ENCODE measurements at regions of chr3 and their contacts with region 1.

Region 1: GRCh38 chr3:58491506-58492402 is at the start of gene KCTD6:
- DNase-seq: peak; percentile 87
- ATAC-seq: peak; percentile 95
- H3K4me3 Mint-ChIP-seq: peak within 1 kb of the TSS; percentile 86
- H3K27ac Mint-ChIP-seq: peak within 1 kb of the TSS; percentile 76
- H3K4me1 Mint-ChIP-seq: peaks cover 17% of the 10 kb centered on the region
- H3K27me3 Mint-ChIP-seq: peaks cover 35% of the 10 kb centered on the region
- total RNA-seq, gene KCTD6: 5.2 to 6.2 TPM

Region 2: DNA sequence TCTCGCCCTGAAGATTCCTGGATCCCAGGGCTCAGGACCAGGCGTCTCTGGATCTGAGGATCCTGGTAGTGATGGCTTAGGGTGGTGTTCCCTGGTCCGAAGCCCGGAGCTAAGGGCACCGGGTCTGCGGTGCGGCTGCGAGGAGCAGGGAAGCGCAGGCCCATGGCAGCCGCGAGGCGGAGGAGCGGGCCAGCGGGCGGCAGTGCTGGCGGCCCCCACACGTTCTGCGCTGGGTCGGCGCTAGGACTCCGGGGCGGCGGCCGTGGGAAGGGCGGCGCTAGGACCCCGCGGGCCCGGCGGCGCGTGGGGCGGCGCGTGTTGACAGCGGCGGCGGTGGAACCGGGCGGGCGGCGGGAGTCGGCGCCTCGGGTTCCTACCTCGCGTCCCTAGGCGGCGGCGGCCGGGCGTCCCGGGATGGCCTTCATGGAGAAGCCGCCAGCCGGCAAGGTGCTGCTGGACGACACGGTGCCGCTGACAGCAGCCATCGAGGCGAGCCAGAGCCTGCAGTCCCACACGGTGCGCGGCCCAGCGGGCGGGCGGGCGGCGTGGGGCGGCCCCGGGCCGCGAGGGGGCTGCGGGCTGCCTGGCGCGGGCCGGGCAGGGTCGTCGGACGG is 159.1 kb before region 1 on chr3 and contains the start of gene PXK:
- CTCF ChIA-PET with region 1: interaction called, 18 read pairs
- POLR2A ChIA-PET with region 1: interaction called, 3 read pairs
- DNase-seq: peak; percentile 84
- ATAC-seq: peak; percentile 94
- H3K4me3 Mint-ChIP-seq: peak within 1 kb of the TSS; percentile 100
- H3K27ac Mint-ChIP-seq: peak within 1 kb of the TSS; percentile 94
- H3K4me1 Mint-ChIP-seq: peaks cover 41% of the 10 kb centered on the region
- H3K27me3 Mint-ChIP-seq: no peaks in the 10 kb centered on the region
- total RNA-seq, gene PXK: 31.5 to 33.4 TPM

Region 3: DNA sequence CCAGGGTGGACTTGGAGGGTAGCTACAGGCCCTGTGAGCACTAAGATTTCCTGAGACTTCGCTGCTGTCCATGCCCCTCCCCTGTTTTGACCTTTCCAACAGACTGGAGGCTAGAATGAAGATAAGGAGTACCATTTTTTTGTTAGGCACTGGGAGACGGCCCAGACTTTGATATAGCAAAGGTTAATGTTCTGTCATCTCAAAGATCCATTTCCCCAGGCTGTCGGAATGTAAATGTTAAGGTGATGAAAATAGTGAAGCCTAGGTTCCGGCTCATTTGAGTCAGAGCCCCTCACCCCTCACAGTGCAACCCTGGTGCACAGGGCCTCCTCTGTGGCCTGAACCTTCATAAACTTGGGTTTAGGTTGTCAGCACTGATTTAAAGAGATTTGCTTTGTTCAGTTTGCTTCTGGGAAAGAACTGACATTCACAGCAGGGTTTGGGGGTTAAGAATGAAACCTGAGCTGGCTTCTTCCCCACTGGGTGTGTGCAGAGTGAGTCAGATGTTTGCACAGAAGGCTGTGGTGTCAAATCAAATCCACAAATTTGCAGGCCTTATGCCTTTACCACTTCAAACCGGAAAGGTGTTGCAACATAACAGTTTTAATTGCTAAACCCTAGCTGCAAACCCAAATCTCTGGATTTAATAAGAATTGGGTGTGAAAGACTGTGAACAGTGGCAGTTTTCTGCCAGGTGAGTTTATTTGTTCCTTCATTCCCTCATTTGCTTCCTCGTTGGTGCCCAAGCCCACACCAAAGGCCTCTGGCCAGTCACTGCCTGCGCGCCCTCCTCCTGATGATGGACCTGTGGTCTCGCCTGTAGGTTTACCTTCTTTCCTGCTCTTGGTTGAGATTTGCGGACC is 20.5 kb before region 1 on chr3:
- CTCF ChIA-PET with region 1: interaction called, 12 read pairs
- POLR2A ChIA-PET with region 1: interaction called, 5 read pairs
- DNase-seq: peak; percentile 67
- ATAC-seq: peak; percentile 91
- H3K4me3 Mint-ChIP-seq: no peak overlapping the region
- H3K27ac Mint-ChIP-seq: peak overlapping the region; percentile 65
- H3K4me1 Mint-ChIP-seq: peaks cover 28% of the 10 kb centered on the region
- H3K27me3 Mint-ChIP-seq: peaks cover 14% of the 10 kb centered on the region

Measured in activated CD8-positive, alpha-beta T cell treated with anti-CD3 and anti-CD28 coated beads, Interleukin-2, amount 10 ng/mL, durations not matched to agents 7 days and 5 days (primary cell).